Activated B cell treated with CpG ODN at 0.5 μM for 24 hours (primary cell): ENCODE measurements at regions of chr13 and their contacts with region 1.

Region 1: GRCh38 chr13:30216111-30216510 is 91.2 kb downstream of the KATNAL1 start:
- DNase-seq: no peak
- ATAC-seq: no peak
- H3K4me3 Mint-ChIP-seq: no peak overlapping the region
- H3K27ac Mint-ChIP-seq: no peak overlapping the region
- H3K4me1 Mint-ChIP-seq: no peaks in the 10 kb centered on the region
- H3K27me3 Mint-ChIP-seq: no peaks in the 10 kb centered on the region
- CTCF ChIP-seq: no peak

Region 2: GRCh38 chr13:30257468-30258099 is 41.5 kb after region 1 on chr13:
- CTCF ChIA-PET with region 1: no interaction called
- POLR2A ChIA-PET with region 1: no interaction called
- intact Hi-C with region 1: loop called (anchors 1 kb)
- DNase-seq: no peak
- ATAC-seq: no peak
- H3K4me3 Mint-ChIP-seq: no peak overlapping the region
- H3K27ac Mint-ChIP-seq: no peak overlapping the region
- H3K4me1 Mint-ChIP-seq: peaks cover 12% of the 10 kb centered on the region
- H3K27me3 Mint-ChIP-seq: no peaks in the 10 kb centered on the region
- CTCF ChIP-seq: no peak

Region 3: DNA sequence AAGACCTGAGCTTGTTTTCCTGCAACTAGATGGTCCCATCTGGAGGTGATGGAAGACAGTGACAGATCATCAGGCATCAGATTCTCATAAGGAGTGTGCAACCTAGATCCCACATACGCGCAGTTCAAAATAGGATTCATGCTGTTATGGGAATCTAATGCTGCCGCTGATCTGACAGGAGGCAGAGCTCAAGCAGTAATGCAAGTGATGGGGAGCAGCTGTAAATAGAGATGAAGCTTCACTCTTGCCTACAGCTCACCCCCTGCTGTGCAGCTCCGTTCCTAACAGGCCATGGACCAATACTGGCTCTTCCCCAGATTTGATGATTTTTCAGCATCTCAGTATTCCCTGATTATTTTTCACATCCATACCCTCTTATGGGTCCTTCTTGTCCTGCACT is 1314.8 kb after region 1 on chr13:
- CTCF ChIA-PET with region 1: no interaction called
- POLR2A ChIA-PET with region 1: no interaction called
- intact Hi-C with region 1: no loop called
- DNase-seq: no peak
- ATAC-seq: no peak
- H3K4me3 Mint-ChIP-seq: no peak overlapping the region
- H3K27ac Mint-ChIP-seq: no peak overlapping the region
- H3K4me1 Mint-ChIP-seq: no peaks in the 10 kb centered on the region
- H3K27me3 Mint-ChIP-seq: no peaks in the 10 kb centered on the region
- CTCF ChIP-seq: no peak